ENCODE measurements at regions of chr11 and their contacts with region 1.

Region 1: GRCh38 chr11:83156150-83156995 is 558 bp upstream of the PCF11 start:
- DNase-seq: peak; percentile 99
- ATAC-seq: peak; percentile 92
- H3K4me3 Mint-ChIP-seq: peak overlapping the region; percentile 100
- H3K27ac Mint-ChIP-seq: peak overlapping the region; percentile 100
- H3K4me1 Mint-ChIP-seq: peaks cover 33% of the 10 kb centered on the region
- H3K27me3 Mint-ChIP-seq: no peaks in the 10 kb centered on the region

Region 2: DNA sequence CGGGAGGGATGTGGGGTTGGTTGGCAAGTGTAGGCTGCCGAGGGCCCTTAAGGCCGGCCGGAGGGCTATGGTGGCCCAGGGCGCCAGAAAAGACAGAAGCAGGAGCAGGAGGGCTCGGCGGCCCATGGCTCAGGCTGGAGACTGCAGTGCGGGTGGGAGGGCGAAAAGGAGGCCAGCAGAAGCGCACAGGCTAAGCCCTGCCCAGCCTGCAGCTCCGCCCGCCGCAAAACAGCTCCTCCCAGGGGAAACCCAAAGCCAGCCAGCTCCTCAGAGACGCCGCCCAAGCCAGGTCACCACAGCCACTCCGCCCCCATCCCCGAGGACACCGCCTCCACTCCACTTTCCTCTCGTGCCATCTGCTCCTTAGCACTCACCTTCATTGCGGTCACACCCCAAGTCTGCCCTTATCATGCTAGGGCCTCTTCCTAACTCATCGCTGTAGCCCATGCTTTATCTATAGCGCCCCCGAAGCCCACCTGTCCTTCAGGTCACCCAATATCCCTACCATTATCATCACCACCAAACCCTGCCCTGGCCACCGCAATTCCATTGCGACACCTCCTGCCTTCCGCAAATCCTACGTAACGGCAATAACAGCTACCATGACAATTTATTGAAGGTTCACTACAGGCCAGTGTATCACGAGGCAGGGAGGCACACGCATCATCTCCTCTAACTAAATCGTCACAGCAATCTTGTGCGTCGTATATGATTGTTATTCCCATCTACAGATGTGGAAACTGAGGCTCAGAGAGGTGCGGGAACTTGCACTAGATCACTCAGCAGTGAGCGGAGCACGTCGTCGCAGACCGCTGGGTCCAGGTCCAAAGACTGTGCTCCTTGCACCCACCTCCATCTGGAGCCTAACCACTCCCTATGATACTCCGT is 255.9 kb before region 1 on chr11 and contains the start of gene PRCP:
- CTCF ChIA-PET with region 1: interaction called, 13 read pairs
- POLR2A ChIA-PET with region 1: interaction called, 71 read pairs
- DNase-seq: peak; percentile 96
- ATAC-seq: peak; percentile 83
- H3K4me3 Mint-ChIP-seq: peak within 1 kb of the TSS; percentile 97
- H3K27ac Mint-ChIP-seq: peak within 1 kb of the TSS; percentile 99
- H3K4me1 Mint-ChIP-seq: peaks cover 48% of the 10 kb centered on the region
- H3K27me3 Mint-ChIP-seq: no peaks in the 10 kb centered on the region
- total RNA-seq, gene PRCP: 17.2 to 18.2 TPM

Region 3: GRCh38 chr11:83071567-83072349 is 84.6 kb before region 1 on chr11 and contains the start of gene RAB30:
- CTCF ChIA-PET with region 1: no interaction called
- POLR2A ChIA-PET with region 1: interaction called, 68 read pairs
- DNase-seq: peak; percentile 98
- ATAC-seq: peak; percentile 98
- H3K4me3 Mint-ChIP-seq: no peak within 1 kb of the TSS
- H3K27ac Mint-ChIP-seq: no peak within 1 kb of the TSS
- H3K4me1 Mint-ChIP-seq: peaks cover 28% of the 10 kb centered on the region
- H3K27me3 Mint-ChIP-seq: no peaks in the 10 kb centered on the region
- total RNA-seq, gene RAB30: 8.8 to 13.3 TPM

Region 4: GRCh38 chr11:83187465-83187864 is 31.1 kb after region 1 on chr11:
- CTCF ChIA-PET with region 1: interaction called, 3 read pairs
- POLR2A ChIA-PET with region 1: interaction called, 10 read pairs
- DNase-seq: no peak
- ATAC-seq: no peak
- H3K4me3 Mint-ChIP-seq: no peak overlapping the region
- H3K27ac Mint-ChIP-seq: no peak overlapping the region
- H3K4me1 Mint-ChIP-seq: peaks cover 7% of the 10 kb centered on the region
- H3K27me3 Mint-ChIP-seq: no peaks in the 10 kb centered on the region

Region 5: GRCh38 chr11:83285771-83286528 is 129.6 kb after region 1 on chr11 and contains the start of gene CCDC90B:
- CTCF ChIA-PET with region 1: no interaction called
- POLR2A ChIA-PET with region 1: interaction called, 17 read pairs
- DNase-seq: peak; percentile 97
- ATAC-seq: peak; percentile 94
- H3K4me3 Mint-ChIP-seq: peak within 1 kb of the TSS; percentile 95
- H3K27ac Mint-ChIP-seq: peak within 1 kb of the TSS; percentile 99
- H3K4me1 Mint-ChIP-seq: peaks cover 30% of the 10 kb centered on the region
- H3K27me3 Mint-ChIP-seq: peaks cover under 1% of the 10 kb centered on the region
- total RNA-seq, gene CCDC90B: 30.2 to 31.3 TPM